Activated CD8-positive, alpha-beta T cell treated with anti-CD3 and anti-CD28 coated beads for 36 hours (primary cell): ENCODE measurements at regions of chr2 and their contacts with region 1.

Region 1: GRCh38 chr2:234544659-234545611 is 48.1 kb upstream of the ARL4C start:
- DNase-seq: peak; percentile 84
- ATAC-seq: peak; percentile 94
- H3K4me3 Mint-ChIP-seq: no peak overlapping the region
- H3K27ac Mint-ChIP-seq: no peak overlapping the region
- H3K4me1 Mint-ChIP-seq: no peaks in the 10 kb centered on the region
- H3K27me3 Mint-ChIP-seq: peaks cover 10% of the 10 kb centered on the region
- CTCF ChIP-seq: peak; percentile 90

Region 2: GRCh38 chr2:233822781-233823730 is 721.9 kb before region 1 on chr2:
- CTCF ChIA-PET with region 1: no interaction called
- POLR2A ChIA-PET with region 1: no interaction called
- intact Hi-C with region 1: no loop called
- DNase-seq: no peak
- ATAC-seq: no peak
- H3K4me3 Mint-ChIP-seq: no peak overlapping the region
- H3K27ac Mint-ChIP-seq: no peak overlapping the region
- H3K4me1 Mint-ChIP-seq: no peaks in the 10 kb centered on the region
- H3K27me3 Mint-ChIP-seq: peaks cover 2% of the 10 kb centered on the region
- CTCF ChIP-seq: no peak

Region 3: GRCh38 chr2:233976690-233977294 is 568.1 kb before region 1 on chr2:
- CTCF ChIA-PET with region 1: interaction called, 5 read pairs
- POLR2A ChIA-PET with region 1: no interaction called
- intact Hi-C with region 1: loop called (anchors 5 kb)
- DNase-seq: no peak
- ATAC-seq: peak; percentile 52
- H3K4me3 Mint-ChIP-seq: no peak overlapping the region
- H3K27ac Mint-ChIP-seq: no peak overlapping the region
- H3K4me1 Mint-ChIP-seq: peaks cover 30% of the 10 kb centered on the region
- H3K27me3 Mint-ChIP-seq: no peaks in the 10 kb centered on the region
- CTCF ChIP-seq: peak; percentile 65

Region 4: GRCh38 chr2:234135720-234136221 is 409.2 kb before region 1 on chr2:
- CTCF ChIA-PET with region 1: interaction called, 32 read pairs
- POLR2A ChIA-PET with region 1: no interaction called
- intact Hi-C with region 1: loop called (anchors 5 kb)
- DNase-seq: peak; percentile 66
- ATAC-seq: peak; percentile 83
- H3K4me3 Mint-ChIP-seq: no peak overlapping the region
- H3K27ac Mint-ChIP-seq: no peak overlapping the region
- H3K4me1 Mint-ChIP-seq: peaks cover 17% of the 10 kb centered on the region
- H3K27me3 Mint-ChIP-seq: no peaks in the 10 kb centered on the region
- CTCF ChIP-seq: peak; percentile 90

Region 5: DNA sequence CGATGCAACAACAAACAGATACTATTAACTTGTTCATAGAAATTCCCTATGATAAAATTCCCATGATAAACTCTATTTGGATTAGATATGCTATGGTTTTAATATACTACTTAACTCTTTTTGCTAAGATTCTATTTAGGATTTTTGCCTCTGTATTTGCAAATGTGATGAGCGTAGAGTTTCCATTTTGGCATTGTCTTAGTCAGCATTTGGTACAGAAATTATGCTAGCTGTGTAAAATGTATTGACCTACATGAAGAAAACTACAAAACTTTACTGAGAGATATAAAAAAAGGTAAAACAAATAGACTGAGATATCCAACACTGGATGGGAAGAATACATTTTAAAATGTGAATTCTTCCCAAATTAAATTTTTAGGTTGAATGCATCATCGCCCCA is 18.2 kb before region 1 on chr2:
- CTCF ChIA-PET with region 1: interaction called, 10 read pairs
- POLR2A ChIA-PET with region 1: no interaction called
- intact Hi-C with region 1: no loop called
- DNase-seq: no peak
- ATAC-seq: no peak
- H3K4me3 Mint-ChIP-seq: no peak overlapping the region
- H3K27ac Mint-ChIP-seq: no peak overlapping the region
- H3K4me1 Mint-ChIP-seq: no peaks in the 10 kb centered on the region
- H3K27me3 Mint-ChIP-seq: peaks cover 9% of the 10 kb centered on the region
- CTCF ChIP-seq: no peak

Region 6: DNA sequence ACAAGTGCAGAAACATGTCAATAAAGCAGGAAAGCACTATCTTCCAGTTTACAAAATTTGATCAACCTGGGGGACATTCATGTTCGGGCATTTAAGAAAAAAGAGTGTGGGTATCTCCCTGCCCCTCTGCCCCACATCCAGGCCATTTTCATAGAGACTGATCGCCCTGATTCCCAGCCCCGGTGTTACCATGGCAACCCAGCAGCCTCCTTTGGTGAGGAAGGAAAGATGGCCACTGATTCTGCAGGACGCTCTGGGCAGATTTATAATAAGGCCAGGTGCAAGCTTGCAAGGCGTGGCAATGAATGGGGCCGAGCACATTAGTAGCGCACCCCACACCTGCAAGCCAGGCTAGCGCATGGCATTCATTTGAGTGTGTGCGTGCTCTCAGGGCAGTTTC is 11.3 kb before region 1 on chr2:
- CTCF ChIA-PET with region 1: interaction called, 22 read pairs
- POLR2A ChIA-PET with region 1: no interaction called
- intact Hi-C with region 1: no loop called
- DNase-seq: no peak
- ATAC-seq: no peak
- H3K4me3 Mint-ChIP-seq: no peak overlapping the region
- H3K27ac Mint-ChIP-seq: no peak overlapping the region
- H3K4me1 Mint-ChIP-seq: no peaks in the 10 kb centered on the region
- H3K27me3 Mint-ChIP-seq: peaks cover 11% of the 10 kb centered on the region
- CTCF ChIP-seq: no peak

Region 7: DNA sequence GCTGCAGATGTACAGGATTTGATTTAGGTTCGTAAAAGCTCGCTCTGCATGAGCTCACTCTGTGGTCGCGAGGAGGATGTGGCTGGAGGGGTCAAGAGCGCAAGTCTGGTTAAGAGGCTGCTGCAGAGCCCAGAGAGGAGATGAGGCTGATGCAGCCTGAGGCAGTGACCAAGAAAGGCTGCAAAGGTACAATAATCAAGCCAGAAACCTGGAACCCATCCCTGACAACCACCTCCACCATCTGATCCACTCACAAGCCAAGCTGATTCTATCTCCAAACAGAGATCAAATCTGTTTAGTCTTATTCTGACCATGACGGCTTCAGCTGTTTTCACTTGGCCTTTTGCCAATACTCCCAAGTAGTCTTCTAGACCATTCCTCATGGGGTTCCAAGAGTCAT is 10.8 kb after region 1 on chr2:
- CTCF ChIA-PET with region 1: interaction called, 13 read pairs
- POLR2A ChIA-PET with region 1: interaction called, 3 read pairs
- intact Hi-C with region 1: no loop called
- DNase-seq: peak; percentile 24
- ATAC-seq: peak; percentile 53
- H3K4me3 Mint-ChIP-seq: no peak overlapping the region
- H3K27ac Mint-ChIP-seq: no peak overlapping the region
- H3K4me1 Mint-ChIP-seq: no peaks in the 10 kb centered on the region
- H3K27me3 Mint-ChIP-seq: peaks cover 5% of the 10 kb centered on the region
- CTCF ChIP-seq: no peak

Region 8: GRCh38 chr2:234773764-234774409 is 229.0 kb after region 1 on chr2:
- CTCF ChIA-PET with region 1: no interaction called
- POLR2A ChIA-PET with region 1: no interaction called
- intact Hi-C with region 1: no loop called
- DNase-seq: no peak
- ATAC-seq: no peak
- H3K4me3 Mint-ChIP-seq: no peak overlapping the region
- H3K27ac Mint-ChIP-seq: no peak overlapping the region
- H3K4me1 Mint-ChIP-seq: no peaks in the 10 kb centered on the region
- H3K27me3 Mint-ChIP-seq: peaks cover 11% of the 10 kb centered on the region
- CTCF ChIP-seq: no peak

Region 9: GRCh38 chr2:235116885-235117492 is 572.1 kb after region 1 on chr2:
- CTCF ChIA-PET with region 1: interaction called, 15 read pairs
- POLR2A ChIA-PET with region 1: no interaction called
- intact Hi-C with region 1: loop called (anchors 5 kb)
- DNase-seq: no peak
- ATAC-seq: no peak
- H3K4me3 Mint-ChIP-seq: no peak overlapping the region
- H3K27ac Mint-ChIP-seq: no peak overlapping the region
- H3K4me1 Mint-ChIP-seq: no peaks in the 10 kb centered on the region
- H3K27me3 Mint-ChIP-seq: peaks cover 12% of the 10 kb centered on the region
- CTCF ChIP-seq: peak; percentile 80